ENCODE measurements at regions of chr18 and their contacts with region 1.

Region 1: GRCh38 chr18:76398896-76399612 is 96.0 kb downstream of the ZNF516 start:
- DNase-seq: peak; percentile 84
- ATAC-seq: peak; percentile 97
- H3K4me3 Mint-ChIP-seq: no peak overlapping the region
- H3K27ac Mint-ChIP-seq: no peak overlapping the region
- H3K4me1 Mint-ChIP-seq: peaks cover 6% of the 10 kb centered on the region
- H3K27me3 Mint-ChIP-seq: no peaks in the 10 kb centered on the region
- CTCF ChIP-seq: peak; percentile 95

Region 2: GRCh38 chr18:76410660-76411417 is 11.8 kb after region 1 on chr18:
- CTCF ChIA-PET with region 1: interaction called, 18 read pairs
- POLR2A ChIA-PET with region 1: no interaction called
- intact Hi-C with region 1: no loop called
- DNase-seq: peak; percentile 51
- ATAC-seq: peak; percentile 88
- H3K4me3 Mint-ChIP-seq: no peak overlapping the region
- H3K27ac Mint-ChIP-seq: no peak overlapping the region
- H3K4me1 Mint-ChIP-seq: peaks cover 30% of the 10 kb centered on the region
- H3K27me3 Mint-ChIP-seq: no peaks in the 10 kb centered on the region
- CTCF ChIP-seq: no peak

Region 3: GRCh38 chr18:76686737-76687262 is 287.7 kb after region 1 on chr18:
- CTCF ChIA-PET with region 1: interaction called, 10 read pairs
- POLR2A ChIA-PET with region 1: no interaction called
- intact Hi-C with region 1: no loop called
- DNase-seq: peak; percentile 37
- ATAC-seq: peak; percentile 46
- H3K4me3 Mint-ChIP-seq: no peak overlapping the region
- H3K27ac Mint-ChIP-seq: no peak overlapping the region
- H3K4me1 Mint-ChIP-seq: peaks cover 16% of the 10 kb centered on the region
- H3K27me3 Mint-ChIP-seq: peaks cover 37% of the 10 kb centered on the region
- CTCF ChIP-seq: peak; percentile 17

Region 4: DNA sequence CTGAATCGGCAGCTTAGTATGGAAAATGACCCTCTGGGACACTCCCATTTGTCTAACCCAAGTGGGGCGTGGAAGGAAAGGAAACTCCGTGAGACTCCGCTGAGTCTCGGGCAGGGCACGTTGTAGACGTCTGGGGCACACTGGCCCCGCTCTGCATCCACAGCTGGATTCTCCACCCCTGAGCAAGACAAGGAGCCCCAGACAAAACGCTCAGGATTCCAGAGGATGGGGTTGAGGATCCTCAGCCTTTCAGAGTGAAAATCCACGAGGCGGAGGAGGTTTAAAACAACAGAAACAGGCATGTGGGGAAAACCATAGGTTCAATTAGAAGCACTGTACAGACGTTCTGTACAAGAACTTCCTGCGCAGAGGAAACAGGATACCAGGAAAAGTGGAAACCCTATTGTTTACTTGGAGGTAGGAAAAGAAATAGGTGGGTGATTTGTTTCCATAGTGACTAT is 298.4 kb after region 1 on chr18:
- CTCF ChIA-PET with region 1: interaction called, 10 read pairs
- POLR2A ChIA-PET with region 1: no interaction called
- intact Hi-C with region 1: no loop called
- DNase-seq: no peak
- ATAC-seq: no peak
- H3K4me3 Mint-ChIP-seq: no peak overlapping the region
- H3K27ac Mint-ChIP-seq: no peak overlapping the region
- H3K4me1 Mint-ChIP-seq: peaks cover 5% of the 10 kb centered on the region
- H3K27me3 Mint-ChIP-seq: peaks cover 44% of the 10 kb centered on the region
- CTCF ChIP-seq: no peak

Region 5: DNA sequence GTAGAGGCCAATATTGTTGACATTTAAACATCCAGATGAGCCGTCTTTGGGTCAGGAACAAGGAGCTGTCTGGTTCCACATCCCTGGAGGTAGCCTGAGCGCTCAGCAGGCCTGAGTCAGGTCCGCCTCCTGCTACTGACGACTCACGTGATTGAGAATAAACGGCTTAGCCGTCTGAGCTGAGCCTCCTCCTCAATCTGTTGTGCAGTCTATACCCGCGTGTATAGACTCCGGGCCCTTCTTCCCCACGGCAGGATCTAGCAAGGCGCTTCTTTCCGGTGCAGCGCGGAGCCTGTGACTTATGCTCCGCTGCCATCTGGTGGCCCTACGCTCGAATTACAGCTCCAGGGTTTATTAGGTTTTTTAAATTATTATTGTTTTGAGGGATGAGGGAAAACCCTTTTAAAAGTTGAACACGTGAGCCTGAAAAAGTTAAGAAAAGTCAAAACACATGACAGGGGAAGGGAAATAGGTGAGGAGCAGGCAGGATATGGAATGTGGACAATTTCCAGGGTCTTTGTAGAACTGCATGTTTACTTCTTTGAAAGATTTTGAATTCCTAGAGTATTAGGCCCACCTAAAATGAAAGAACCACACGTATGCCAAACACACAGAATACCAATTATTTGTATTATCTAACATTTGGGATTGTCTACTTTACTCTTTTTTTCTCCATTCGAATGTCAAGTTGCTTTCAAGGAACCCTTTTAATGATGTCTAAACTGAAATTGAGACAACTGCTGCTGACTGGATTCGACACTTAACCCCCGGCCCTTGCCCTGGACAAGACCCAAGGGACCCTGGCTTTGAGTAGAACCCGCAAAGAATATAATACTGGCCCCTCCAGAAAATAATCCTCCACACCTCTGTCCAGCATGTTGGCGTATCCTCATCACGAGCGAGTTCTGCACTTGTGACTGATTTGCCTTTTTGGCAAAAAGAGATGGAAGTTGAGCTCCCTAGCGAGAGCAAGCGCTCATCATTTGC is 310.9 kb after region 1 on chr18:
- CTCF ChIA-PET with region 1: interaction called, 117 read pairs
- POLR2A ChIA-PET with region 1: interaction called, 3 read pairs
- intact Hi-C with region 1: loop called (anchors 1 kb)
- DNase-seq: peak; percentile 75
- ATAC-seq: peak; percentile 99
- H3K4me3 Mint-ChIP-seq: no peak overlapping the region
- H3K27ac Mint-ChIP-seq: no peak overlapping the region
- H3K4me1 Mint-ChIP-seq: no peaks in the 10 kb centered on the region
- H3K27me3 Mint-ChIP-seq: peaks cover 3% of the 10 kb centered on the region
- CTCF ChIP-seq: peak; percentile 97

Region 6: DNA sequence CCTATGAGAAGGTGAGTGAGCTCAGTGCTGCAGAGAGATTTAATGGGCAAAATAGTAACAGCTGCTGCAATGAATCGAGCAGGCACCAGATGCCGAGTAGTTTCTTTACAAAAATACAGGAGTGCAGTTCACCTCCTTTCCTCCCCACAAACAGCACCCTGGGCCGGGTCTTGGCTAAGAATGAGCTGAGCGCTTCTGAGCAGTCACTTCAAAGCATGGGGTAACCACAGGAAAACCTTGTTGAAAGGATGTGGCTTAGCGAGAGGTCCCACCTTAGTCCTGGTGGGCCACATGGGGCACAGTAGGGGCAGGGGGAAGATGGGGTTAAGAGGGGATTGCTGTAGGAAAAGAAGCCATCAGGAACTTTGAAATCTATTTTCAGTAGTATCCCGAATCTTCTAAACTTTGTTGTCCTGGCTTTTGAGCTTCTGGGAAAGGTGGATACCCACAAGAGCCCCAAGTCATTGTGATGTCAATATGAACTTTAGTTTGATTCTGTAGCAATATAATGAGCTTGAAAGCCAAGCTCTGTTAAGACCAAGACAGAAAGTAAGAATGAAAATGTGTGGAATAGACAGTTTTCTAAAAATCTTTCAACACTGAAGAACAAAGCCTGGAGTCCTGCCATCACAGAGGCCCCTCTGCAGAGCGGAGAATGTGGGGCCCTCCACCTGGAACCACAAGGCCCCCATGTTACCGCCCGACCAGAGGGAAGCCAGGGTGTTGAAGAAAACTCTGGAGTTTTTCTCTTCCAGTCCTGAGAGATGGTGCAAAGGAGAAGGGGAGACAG is 322.3 kb after region 1 on chr18:
- CTCF ChIA-PET with region 1: interaction called, 12 read pairs
- POLR2A ChIA-PET with region 1: no interaction called
- intact Hi-C with region 1: no loop called
- DNase-seq: peak; percentile 86
- ATAC-seq: peak; percentile 97
- H3K4me3 Mint-ChIP-seq: peak overlapping the region; percentile 58
- H3K27ac Mint-ChIP-seq: peak overlapping the region; percentile 47
- H3K4me1 Mint-ChIP-seq: peaks cover 32% of the 10 kb centered on the region
- H3K27me3 Mint-ChIP-seq: peaks cover 24% of the 10 kb centered on the region
- CTCF ChIP-seq: no peak